Activated CD4-positive, alpha-beta T cell treated with anti-CD3 and anti-CD28 coated beads, Interleukin-2, amount 10 ng/mL, durations not matched to agents 7 days and 5 days (primary cell): ENCODE measurements at regions of chr20 and their contacts with region 1.

Region 1: GRCh38 chr20:57374931-57375651 is 16.1 kb upstream of the RBM38 start:
- DNase-seq: no peak
- H3K4me3 Mint-ChIP-seq: no peak overlapping the region
- H3K27ac Mint-ChIP-seq: peak overlapping the region; percentile 50
- H3K4me1 Mint-ChIP-seq: peaks cover 21% of the 10 kb centered on the region
- H3K27me3 Mint-ChIP-seq: no peaks in the 10 kb centered on the region

Region 2: DNA sequence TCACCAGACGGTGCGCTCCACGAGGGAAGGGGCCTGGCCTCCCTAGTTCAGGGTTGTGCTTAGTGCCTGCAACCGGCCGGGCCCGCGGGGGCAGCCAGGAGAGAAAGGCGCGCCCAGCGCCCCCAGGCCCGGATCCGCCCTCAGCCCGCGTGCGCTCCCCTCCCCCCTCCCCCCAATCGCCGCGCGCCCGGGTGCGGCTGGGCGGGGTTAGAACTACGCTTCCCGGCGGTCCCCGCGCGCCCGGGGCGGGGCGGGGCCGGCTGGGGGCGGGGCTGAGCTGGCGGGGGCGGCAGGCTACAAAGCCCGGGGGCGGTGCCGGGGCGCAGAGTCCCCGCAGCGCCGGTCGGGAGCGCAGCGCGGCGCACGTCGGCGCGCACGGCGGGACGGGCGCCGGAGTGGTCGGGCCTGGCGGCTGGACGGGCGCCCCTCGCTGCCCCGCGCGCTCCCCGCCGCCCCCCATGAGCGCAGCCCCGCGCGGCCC is 16.0 kb after region 1 on chr20 and contains the start of gene RBM38:
- CTCF ChIA-PET with region 1: interaction called, 18 read pairs
- POLR2A ChIA-PET with region 1: no interaction called
- DNase-seq: peak; percentile 73
- H3K4me3 Mint-ChIP-seq: peak within 1 kb of the TSS; percentile 90
- H3K27ac Mint-ChIP-seq: peak within 1 kb of the TSS; percentile 93
- H3K4me1 Mint-ChIP-seq: peaks cover 49% of the 10 kb centered on the region
- H3K27me3 Mint-ChIP-seq: no peaks in the 10 kb centered on the region
- total RNA-seq, gene RBM38: 97.3 to 98.8 TPM

Region 3: GRCh38 chr20:57414867-57415592 is 39.9 kb after region 1 on chr20:
- CTCF ChIA-PET with region 1: no interaction called
- POLR2A ChIA-PET with region 1: no interaction called
- DNase-seq: no peak
- H3K4me3 Mint-ChIP-seq: no peak overlapping the region
- H3K27ac Mint-ChIP-seq: no peak overlapping the region
- H3K4me1 Mint-ChIP-seq: peaks cover 22% of the 10 kb centered on the region
- H3K27me3 Mint-ChIP-seq: peaks cover 4% of the 10 kb centered on the region

Region 4: GRCh38 chr20:57652606-57653545 is 277.8 kb after region 1 on chr20:
- CTCF ChIA-PET with region 1: no interaction called
- POLR2A ChIA-PET with region 1: no interaction called
- DNase-seq: no peak
- H3K4me3 Mint-ChIP-seq: no peak overlapping the region
- H3K27ac Mint-ChIP-seq: no peak overlapping the region
- H3K4me1 Mint-ChIP-seq: peaks cover 8% of the 10 kb centered on the region
- H3K27me3 Mint-ChIP-seq: peaks cover 7% of the 10 kb centered on the region